ENCODE measurements at regions of chr6 and their contacts with region 1.

Region 1: DNA sequence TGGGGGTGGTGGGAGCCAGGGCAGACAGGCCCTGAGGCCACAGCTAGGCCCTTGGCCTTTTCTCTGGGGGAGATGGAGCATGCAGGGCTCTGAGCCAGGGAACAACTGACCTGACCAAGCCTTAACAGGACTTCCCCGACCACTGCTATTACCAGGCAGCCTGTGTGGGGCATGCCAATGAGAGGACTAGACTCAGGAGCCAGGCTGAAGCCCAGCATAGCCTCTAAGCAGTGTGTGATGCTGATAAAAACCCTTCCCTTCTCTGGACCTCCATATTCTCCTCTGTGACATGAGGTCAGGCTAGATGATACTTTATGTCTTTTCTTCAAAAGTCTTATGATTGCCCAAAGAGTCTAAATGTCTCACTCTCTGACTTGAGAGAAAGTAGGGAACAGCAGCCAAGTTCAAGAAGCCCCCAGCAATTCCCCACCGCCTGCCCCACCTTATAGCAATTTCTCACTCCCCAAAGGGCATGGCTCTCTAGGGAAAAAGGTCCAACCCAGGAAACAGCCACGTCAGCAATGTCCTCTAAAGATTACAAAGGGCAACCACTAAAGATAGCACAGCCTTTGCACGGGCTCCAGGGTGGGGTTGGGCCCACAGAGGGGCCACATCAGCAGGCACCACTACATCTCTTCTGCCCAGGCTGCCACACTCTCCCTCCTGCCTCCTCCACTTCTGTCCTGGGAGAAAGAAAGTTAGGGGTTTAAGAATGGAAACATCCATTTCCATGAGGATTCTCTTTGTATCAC is 71.3 kb downstream of the TRERF1 start:
- DNase-seq: no peak
- ATAC-seq: peak in 2 of 4 donors; percentile 45 to 71
- H3K4me3 ChIP-seq: no peak overlapping the region
- H3K27ac ChIP-seq: no peak overlapping the region
- H3K4me1 ChIP-seq: peaks cover 0 to 33% (median 0%) of the 10 kb centered on the region in 12 donors
- H3K27me3 ChIP-seq: no peaks in the 10 kb centered on the region
- CTCF ChIP-seq: no peak
- POLR2A ChIP-seq: no peak

Region 2: DNA sequence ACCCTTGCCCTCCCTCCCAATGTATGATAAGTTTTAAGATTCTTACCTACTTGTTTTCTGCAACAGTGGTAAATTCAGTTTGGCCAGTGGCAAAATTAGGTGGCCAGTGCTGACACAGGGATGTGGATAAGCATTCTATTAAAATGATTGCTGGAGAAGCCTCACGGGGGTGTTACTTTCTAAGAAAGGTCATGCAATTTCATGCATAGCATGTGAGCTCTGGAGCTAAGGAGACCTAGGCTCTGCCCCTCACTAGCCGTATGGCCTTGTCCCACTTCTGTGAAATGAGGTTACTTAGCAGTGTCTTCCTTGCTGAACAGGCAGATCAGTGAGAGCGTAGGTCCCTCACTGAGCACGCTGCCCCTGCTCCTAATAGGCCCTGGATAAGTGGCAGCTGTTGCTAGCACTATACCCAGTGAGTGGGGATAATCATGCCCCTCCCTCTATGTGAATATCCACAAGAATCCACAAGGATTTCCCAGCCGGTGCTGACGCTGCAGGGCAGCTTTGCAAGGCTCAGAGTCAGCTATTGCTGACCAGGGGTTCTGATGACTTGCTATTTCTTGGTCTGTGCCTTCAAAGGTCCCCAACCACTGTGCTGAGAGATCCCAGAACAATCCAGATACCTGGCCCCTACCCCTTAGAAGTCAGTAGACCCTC is 76.2 kb before region 1 on chr6:
- intact Hi-C with region 1: no loop called
- DNase-seq: no peak
- ATAC-seq: no peak
- H3K4me3 ChIP-seq: no peak overlapping the region
- H3K27ac ChIP-seq: no peak overlapping the region
- H3K4me1 ChIP-seq: peaks cover 0 to 6% (median 0%) of the 10 kb centered on the region in 12 donors
- H3K27me3 ChIP-seq: no peaks in the 10 kb centered on the region
- CTCF ChIP-seq: no peak
- POLR2A ChIP-seq: no peak

Region 3: DNA sequence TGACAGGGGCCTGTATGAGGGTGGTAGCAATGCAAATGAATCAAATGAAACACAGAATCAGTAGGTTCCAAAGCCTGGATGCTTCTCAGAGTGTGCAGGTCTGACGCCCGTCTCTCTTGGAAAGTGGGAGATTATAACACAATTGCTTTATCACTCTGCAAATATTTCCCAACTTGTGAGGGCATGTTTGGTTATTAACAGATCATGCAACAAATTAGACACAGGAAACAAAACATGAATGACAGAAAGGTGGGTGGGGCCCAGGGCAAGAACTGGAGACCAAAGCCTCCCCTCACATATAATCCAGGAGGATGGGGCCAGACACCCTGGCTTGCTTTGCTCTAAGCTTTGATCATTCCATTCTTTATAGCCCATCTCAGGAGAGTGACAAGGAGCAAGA is 54.2 kb before region 1 on chr6:
- intact Hi-C with region 1: loop called in 1 of 10 experiments (anchors 5 kb)
- DNase-seq: no peak
- ATAC-seq: no peak
- H3K4me3 ChIP-seq: no peak overlapping the region
- H3K27ac ChIP-seq: no peak overlapping the region
- H3K4me1 ChIP-seq: no peaks in the 10 kb centered on the region
- H3K27me3 ChIP-seq: no peaks in the 10 kb centered on the region
- CTCF ChIP-seq: no peak
- POLR2A ChIP-seq: no peak

Measured in heart left ventricle (tissue), 16 donors.